BJ (cell line): ENCODE measurements at regions of chr10 and their contacts with region 1.

Region 1: GRCh38 chr10:93554760-93555432 is 11.6 kb upstream of the FFAR4 start:
- DNase-seq: no peak
- H3K4me3 ChIP-seq: no peak overlapping the region
- H3K27me3 ChIP-seq: no peaks in the 10 kb centered on the region; the same call in 1 of the 2 replicates
- CTCF ChIP-seq: peak; percentile 79

Region 2: DNA sequence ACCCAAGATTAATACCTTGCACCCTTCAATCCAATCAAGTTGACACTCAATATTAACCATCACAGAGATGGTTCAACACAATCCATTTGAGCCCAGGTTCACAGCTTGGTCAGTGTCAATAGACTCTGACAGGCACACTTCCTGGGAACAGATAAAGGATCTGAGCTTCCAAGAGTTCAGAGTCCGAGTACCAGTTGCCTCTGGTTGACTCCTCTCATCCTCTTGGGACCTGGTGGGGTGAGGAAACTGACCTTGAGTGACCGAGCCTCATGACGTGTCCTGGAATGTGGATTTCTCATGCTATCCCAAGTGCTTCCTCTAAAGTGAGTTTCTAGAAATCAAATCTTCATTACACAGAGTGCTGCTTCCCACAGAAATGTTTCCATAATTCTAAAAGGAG is 319.2 kb before region 1 on chr10:
- CTCF ChIA-PET with region 1: no interaction called
- POLR2A ChIA-PET with region 1: no interaction called
- DNase-seq: no peak
- H3K4me3 ChIP-seq: no peak overlapping the region
- H3K27me3 ChIP-seq: peaks cover 2% of the 10 kb centered on the region
- CTCF ChIP-seq: no peak

Region 3: GRCh38 chr10:93541402-93542357 is 13.2 kb before region 1 on chr10:
- CTCF ChIA-PET with region 1: interaction called, 19 read pairs
- POLR2A ChIA-PET with region 1: no interaction called
- DNase-seq: no peak
- H3K4me3 ChIP-seq: 0 out of 2 replicates have a peak overlapping the region, but pooled peaks have one; percentile 4
- H3K27me3 ChIP-seq: no peaks in the 10 kb centered on the region
- CTCF ChIP-seq: peak; percentile 95

Region 4: GRCh38 chr10:93566435-93567276 is 11.8 kb after region 1 on chr10 and contains the start of gene FFAR4:
- CTCF ChIA-PET with region 1: interaction called, 14 read pairs
- POLR2A ChIA-PET with region 1: no interaction called
- DNase-seq: no peak
- H3K4me3 ChIP-seq: no peak within 1 kb of the TSS
- H3K27me3 ChIP-seq: peaks cover 19% of the 10 kb centered on the region
- CTCF ChIP-seq: no peak
- polyA plus RNA-seq, gene FFAR4: not detected in 2 replicates

Region 5: GRCh38 chr10:93652857-93653256 is 98.0 kb after region 1 on chr10:
- CTCF ChIA-PET with region 1: no interaction called
- POLR2A ChIA-PET with region 1: no interaction called
- DNase-seq: no peak
- H3K4me3 ChIP-seq: no peak overlapping the region
- H3K27me3 ChIP-seq: no peaks in the 10 kb centered on the region
- CTCF ChIP-seq: no peak

Region 6: GRCh38 chr10:93680412-93681047 is 125.6 kb after region 1 on chr10:
- CTCF ChIA-PET with region 1: interaction called, 24 read pairs
- POLR2A ChIA-PET with region 1: no interaction called
- DNase-seq: no peak
- H3K4me3 ChIP-seq: no peak overlapping the region
- H3K27me3 ChIP-seq: no peaks in the 10 kb centered on the region
- CTCF ChIP-seq: peak; percentile 40

Region 7: DNA sequence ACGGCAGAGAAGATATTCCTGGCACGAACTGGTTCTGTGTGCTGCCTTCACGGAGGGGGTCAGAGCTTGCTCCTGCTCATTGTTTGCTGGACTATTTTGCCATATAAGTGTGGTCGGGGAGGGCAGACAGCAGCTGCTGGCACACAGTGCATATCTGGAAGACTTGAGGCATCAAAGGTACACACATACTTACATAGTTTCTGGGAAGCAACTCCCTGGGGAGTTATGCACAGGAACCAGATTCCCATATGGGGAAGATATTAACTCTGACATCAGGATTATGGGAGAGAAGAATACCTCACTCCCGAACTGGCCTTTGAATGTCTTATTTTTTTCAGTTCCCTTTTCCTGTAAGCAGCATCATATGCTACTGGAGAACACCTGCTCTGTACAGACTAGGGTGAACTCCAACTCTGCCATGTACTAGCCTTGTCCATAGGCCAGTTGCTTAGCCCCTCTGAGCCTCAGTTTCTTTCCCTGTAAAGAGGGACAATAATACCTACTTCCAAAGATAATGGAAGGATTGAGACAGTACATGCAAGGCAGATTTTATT is 244.3 kb after region 1 on chr10:
- CTCF ChIA-PET with region 1: no interaction called
- POLR2A ChIA-PET with region 1: no interaction called
- DNase-seq: no peak
- H3K4me3 ChIP-seq: no peak overlapping the region
- H3K27me3 ChIP-seq: peaks cover 10% of the 10 kb centered on the region
- CTCF ChIP-seq: no peak

Region 8: DNA sequence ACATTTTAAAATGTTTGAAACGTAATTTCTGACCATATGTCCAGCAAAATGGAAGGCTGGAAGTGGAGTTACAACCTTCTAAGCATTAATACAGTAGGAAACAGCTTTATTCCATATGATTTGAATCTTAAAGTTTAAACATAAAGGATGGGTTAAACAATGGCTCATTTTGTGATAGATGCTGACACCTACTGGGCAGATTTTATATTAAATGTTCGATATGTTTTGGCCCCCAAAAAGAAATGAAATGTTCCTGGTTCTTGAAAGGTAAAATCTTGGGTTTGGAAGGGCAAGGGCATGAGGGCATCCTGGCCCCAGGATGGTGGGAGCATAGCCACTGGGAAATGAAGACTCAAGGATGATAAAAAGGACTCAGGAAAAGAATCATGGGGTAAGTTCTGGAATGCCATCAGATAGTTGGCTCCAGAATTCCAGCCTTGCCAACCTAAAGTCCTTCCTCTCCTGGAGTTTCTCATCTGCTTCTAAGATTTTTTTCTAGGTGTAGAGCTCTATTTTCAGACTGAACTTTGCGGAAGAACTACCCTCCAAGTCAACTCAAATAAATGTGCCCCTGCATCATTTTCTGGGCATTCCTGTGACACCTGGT is 304.3 kb after region 1 on chr10:
- CTCF ChIA-PET with region 1: interaction called, 18 read pairs
- POLR2A ChIA-PET with region 1: no interaction called
- DNase-seq: no peak
- H3K4me3 ChIP-seq: no peak overlapping the region
- H3K27me3 ChIP-seq: peaks cover 3% of the 10 kb centered on the region
- CTCF ChIP-seq: peak; percentile 41; the same call in 1 of the 2 replicates